ENCODE measurements at regions of chr22 and their contacts with region 1.

Region 1: GRCh38 chr22:21045585-21046294 is at the start of gene LRRC74B:
- DNase-seq: peak; percentile 62 to 89
- H3K4me3 ChIP-seq: peak within 1 kb of the TSS; percentile 37 to 41
- H3K27ac ChIP-seq: no peak within 1 kb of the TSS
- H3K4me1 ChIP-seq: peaks cover 7 to 15% of the 10 kb centered on the region in 2 donors
- H3K27me3 ChIP-seq: no peaks in the 10 kb centered on the region
- CTCF ChIP-seq: no peak
- total RNA-seq, gene LRRC74B: 2.6 TPM

Region 2: GRCh38 chr22:21001560-21002325 is 44.0 kb before region 1 on chr22 and contains the start of gene THAP7:
- intact Hi-C with region 1: loop called (anchors 2 kb)
- DNase-seq: peak; percentile 91 to 99
- H3K4me3 ChIP-seq: peak within 1 kb of the TSS; percentile 70 to 94
- H3K27ac ChIP-seq: peak within 1 kb of the TSS; percentile 97 to 98
- H3K4me1 ChIP-seq: peaks cover 13 to 30% of the 10 kb centered on the region in 2 donors
- H3K27me3 ChIP-seq: no peaks in the 10 kb centered on the region
- CTCF ChIP-seq: no peak
- total RNA-seq, gene THAP7: 37.9 TPM

Measured in ascending aorta (tissue), 2 donors.